Mammary epithelial cell (primary cell): ENCODE measurements at regions of chr14 and their contacts with region 1.

Region 1: GRCh38 chr14:98900798-98901197 is 371.2 kb downstream of the BCL11B start:
- DNase-seq: no peak
- H3K4me3 ChIP-seq: no peak overlapping the region
- H3K27ac ChIP-seq: no peak overlapping the region
- H3K4me1 ChIP-seq: peaks cover 42% of the 10 kb centered on the region
- H3K27me3 ChIP-seq: no peaks in the 10 kb centered on the region
- CTCF ChIP-seq: no peak

Region 2: DNA sequence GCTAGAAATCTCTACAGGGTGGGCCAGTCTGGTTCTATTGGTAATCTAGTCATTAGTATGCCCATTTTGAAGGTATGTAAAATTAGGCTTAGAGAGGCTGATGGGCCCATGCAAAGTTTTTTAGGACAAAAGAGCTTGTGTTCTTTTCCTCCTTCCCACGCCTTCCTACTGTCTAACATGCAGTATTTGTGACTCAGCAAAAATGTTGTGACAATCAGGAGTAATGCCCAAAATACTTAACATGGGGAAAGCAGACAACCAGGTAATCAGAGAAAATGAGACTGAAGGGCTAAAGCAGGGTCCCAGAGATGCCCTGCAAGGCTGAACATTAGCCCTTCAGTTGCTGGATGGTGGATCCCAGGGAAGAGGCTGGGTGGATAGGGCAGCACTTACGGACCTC is 66.7 kb before region 1 on chr14:
- CTCF ChIA-PET with region 1: no interaction called
- dilution Hi-C with region 1: no loop called
- in situ Hi-C with region 1: no loop called
- intact Hi-C with region 1: loop called (anchors 5 kb)
- DNase-seq: peak; percentile 45
- H3K4me3 ChIP-seq: no peak overlapping the region
- H3K27ac ChIP-seq: no peak overlapping the region
- H3K4me1 ChIP-seq: peaks cover 8% of the 10 kb centered on the region
- H3K27me3 ChIP-seq: no peaks in the 10 kb centered on the region
- CTCF ChIP-seq: no peak